WTC11 (cell line): ENCODE measurements at regions of chr6 and their contacts with region 1.

Region 1: DNA sequence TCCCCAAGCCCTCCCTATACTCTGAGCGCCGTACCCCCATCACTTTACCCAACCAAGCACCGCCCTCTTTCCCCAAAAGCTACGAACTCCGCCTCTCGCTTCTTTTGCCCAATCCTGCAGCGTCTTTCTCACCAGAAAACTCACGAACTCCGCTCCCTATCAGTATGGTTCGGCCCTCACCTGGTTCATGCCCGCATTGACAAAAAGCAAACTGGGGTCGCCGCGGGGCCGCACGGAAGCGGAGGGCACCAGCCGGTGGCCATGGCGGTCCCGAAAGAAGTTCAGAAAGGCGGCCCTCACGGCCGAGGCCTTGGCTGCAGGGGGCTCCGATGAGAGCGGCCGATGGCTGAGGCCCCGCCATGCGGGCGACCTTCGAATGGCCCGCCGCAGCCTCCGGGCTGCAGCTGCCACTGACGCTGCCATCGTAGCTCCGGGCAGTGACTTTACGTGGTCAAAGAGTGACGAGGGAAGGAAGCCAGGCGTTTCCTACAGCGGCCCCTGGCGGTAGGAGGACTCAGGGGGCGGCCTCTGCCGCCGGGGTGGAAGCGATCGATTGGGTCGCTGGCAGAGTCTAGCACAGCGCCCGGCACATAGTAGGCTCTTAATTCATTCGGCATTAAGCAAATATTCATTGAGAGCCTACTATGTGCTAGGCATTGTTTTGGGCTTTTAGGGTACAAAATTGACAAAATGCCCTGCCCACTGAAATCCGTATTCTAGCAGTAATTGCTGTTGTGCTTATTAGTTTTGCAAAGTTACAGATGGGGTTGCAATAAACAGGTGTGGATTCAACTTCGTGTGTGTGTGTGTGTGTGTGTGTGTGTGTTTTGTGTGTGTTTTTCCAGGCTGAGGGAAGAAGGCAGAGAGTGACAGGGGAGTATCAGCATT is at the start of gene AARS2:
- DNase-seq: peak; percentile 97
- ATAC-seq: peak; percentile 90
- H3K4me3 Mint-ChIP-seq: peak within 1 kb of the TSS; percentile 99
- H3K27ac Mint-ChIP-seq: peak within 1 kb of the TSS; percentile 95
- H3K4me1 Mint-ChIP-seq: peaks cover 8% of the 10 kb centered on the region
- H3K27me3 Mint-ChIP-seq: no peaks in the 10 kb centered on the region
- CTCF ChIP-seq: peak; percentile 90
- total RNA-seq, gene AARS2: 26.8 to 29.7 TPM (median 28.9 TPM) in 3 replicates

Region 2: DNA sequence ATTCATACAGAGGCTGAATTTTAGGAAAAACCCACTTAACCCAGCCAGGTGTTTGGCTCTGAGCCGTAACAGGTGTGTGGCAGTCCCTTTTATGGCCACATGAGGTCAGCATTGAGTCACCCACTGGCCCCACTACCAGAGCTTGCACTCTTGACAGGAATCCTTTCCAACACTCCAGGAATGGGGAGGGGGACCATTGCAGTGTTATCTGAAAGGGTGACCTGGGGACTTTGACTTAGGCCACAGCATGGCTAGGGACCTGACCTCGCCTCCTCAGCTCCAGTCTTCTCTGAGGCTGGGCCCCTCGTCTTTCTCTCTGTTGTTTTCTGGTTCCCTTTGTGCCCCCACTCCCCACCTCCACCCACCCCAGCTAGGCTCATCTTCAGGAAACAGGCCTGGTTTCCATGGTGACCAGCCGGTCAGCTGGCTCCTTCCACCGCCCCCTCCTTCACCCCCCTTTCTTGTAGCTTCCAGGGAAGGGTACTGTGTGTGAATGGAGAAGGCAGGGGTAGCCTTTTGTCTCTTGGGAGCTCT is 45.0 kb before region 1 on chr6:
- CTCF ChIA-PET with region 1: interaction called, 47 read pairs
- POLR2A ChIA-PET with region 1: no interaction called
- DNase-seq: peak; percentile 86
- ATAC-seq: peak; percentile 34
- H3K4me3 Mint-ChIP-seq: 0 out of 2 replicates have a peak overlapping the region, but pooled peaks have one; percentile 3
- H3K27ac Mint-ChIP-seq: no peak overlapping the region
- H3K4me1 Mint-ChIP-seq: peaks cover 48% of the 10 kb centered on the region
- H3K27me3 Mint-ChIP-seq: peaks cover 31% of the 10 kb centered on the region
- CTCF ChIP-seq: peak; percentile 89

Region 3: GRCh38 chr6:44285552-44286284 is 27.4 kb before region 1 on chr6:
- CTCF ChIA-PET with region 1: interaction called, 10 read pairs
- POLR2A ChIA-PET with region 1: no interaction called
- DNase-seq: peak; percentile 57
- ATAC-seq: peak; percentile 72
- H3K4me3 Mint-ChIP-seq: no peak overlapping the region
- H3K27ac Mint-ChIP-seq: no peak overlapping the region
- H3K4me1 Mint-ChIP-seq: no peaks in the 10 kb centered on the region
- H3K27me3 Mint-ChIP-seq: peaks cover 57% of the 10 kb centered on the region
- CTCF ChIP-seq: no peak

Region 4: GRCh38 chr6:44327096-44327495 is 14.0 kb after region 1 on chr6:
- CTCF ChIA-PET with region 1: interaction called, 22 read pairs
- POLR2A ChIA-PET with region 1: interaction called, 3 read pairs
- DNase-seq: no peak
- ATAC-seq: no peak; the same call in 1 of the 2 replicates
- H3K4me3 Mint-ChIP-seq: no peak overlapping the region
- H3K27ac Mint-ChIP-seq: no peak overlapping the region
- H3K4me1 Mint-ChIP-seq: peaks cover 21% of the 10 kb centered on the region
- H3K27me3 Mint-ChIP-seq: peaks cover 8% of the 10 kb centered on the region
- CTCF ChIP-seq: no peak

Region 5: DNA sequence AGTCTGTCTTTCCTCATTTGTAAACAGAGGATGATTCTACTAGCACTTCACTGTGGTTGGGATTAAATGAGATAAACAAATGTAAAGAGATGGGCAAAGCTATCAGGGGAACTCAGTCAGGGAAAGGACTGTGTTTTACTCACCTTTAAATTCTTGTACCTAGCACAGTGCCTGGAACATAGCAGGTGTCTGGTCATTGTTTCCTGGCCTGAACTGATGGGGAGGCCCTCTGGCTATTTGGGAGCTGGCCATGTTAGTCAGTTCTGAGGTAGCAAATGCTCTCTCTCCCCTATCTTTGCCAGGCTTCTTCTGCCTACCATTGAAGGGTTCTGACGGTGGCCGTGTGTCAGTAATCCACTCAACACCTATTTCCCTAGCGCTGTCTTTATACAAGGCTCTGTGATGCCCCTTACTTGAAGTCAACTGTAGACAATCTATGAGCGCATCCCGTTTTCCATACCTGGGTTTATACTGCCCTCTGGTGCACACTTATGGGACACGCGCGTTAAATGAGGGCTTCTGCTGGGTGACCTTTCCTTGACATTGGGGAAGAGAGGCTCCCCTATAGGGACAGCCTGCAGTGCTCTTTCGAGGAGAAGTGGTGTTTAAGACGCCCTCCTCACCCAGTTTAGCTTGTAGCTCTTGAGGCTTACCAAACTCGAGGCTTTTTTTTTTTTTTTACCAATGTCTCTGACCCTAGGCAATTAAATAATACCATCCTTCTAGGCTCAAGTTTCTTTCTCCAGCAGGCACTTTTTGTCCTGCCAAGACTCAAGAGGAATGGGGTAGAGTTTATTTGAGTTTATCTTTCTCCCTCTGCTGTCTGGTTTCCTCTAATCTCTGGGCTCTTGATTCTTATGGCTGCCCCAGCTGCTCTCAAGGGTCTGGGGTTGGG is 25.3 kb after region 1 on chr6:
- CTCF ChIA-PET with region 1: interaction called, 16 read pairs
- POLR2A ChIA-PET with region 1: interaction called, 3 read pairs
- DNase-seq: peak; percentile 78
- ATAC-seq: peak; percentile 89
- H3K4me3 Mint-ChIP-seq: no peak overlapping the region
- H3K27ac Mint-ChIP-seq: no peak overlapping the region
- H3K4me1 Mint-ChIP-seq: peaks cover 28% of the 10 kb centered on the region
- H3K27me3 Mint-ChIP-seq: peaks cover 16% of the 10 kb centered on the region
- CTCF ChIP-seq: peak; percentile 61